Left cardiac atrium (tissue), 4 donors: ENCODE measurements at regions of chr1 and their contacts with region 1.

Region 1: DNA sequence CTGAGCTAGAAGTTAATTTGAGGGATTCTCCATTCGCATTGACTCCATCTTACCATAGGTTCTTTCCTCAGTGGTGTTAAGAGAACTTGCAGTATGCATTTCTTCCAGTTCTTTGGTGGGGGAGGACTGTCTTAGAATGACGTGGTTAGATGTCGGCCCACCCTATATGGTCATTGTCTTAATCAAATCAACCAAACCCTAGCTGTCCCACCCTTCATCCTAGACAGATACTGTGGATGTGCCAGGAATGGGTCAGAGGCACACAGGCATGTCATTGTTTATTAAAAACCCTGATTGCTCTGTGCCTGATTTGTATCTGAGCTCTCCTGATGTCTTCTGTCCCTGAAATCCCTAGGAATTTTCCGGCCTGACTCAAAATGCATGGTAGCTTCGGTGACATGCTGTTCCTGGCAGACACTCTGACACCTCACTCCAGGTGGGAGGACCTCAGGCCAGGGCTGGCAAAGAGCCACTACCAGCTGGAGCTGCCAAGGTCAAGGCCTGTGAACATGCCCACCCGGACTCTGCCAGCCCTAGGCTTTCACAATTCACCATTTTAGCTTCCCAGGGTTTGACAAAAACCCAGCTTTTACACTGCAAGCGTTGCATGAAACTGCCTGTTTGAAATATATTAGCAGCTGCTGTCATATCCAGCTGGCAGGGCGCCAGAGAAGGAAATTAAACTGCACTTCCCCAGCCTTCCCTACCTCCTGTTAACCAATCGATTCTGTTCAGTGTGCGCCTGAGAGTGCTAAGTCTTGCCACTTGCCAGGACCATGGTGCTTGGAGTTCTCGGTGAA is 134.0 kb downstream of the FAM78B start:
- DNase-seq: no peak
- ATAC-seq: no peak

Region 2: GRCh38 chr1:165965857-165966256 is 66.9 kb before region 1 on chr1:
- intact Hi-C with region 1: no loop called
- DNase-seq: no peak
- ATAC-seq: no peak

Region 3: GRCh38 chr1:166136222-166136621 is 103.5 kb after region 1 on chr1:
- intact Hi-C with region 1: loop called in 1 of 2 experiments (anchors 5 kb)
- DNase-seq: peak; percentile 57
- ATAC-seq: peak in 1 of 2 donors; percentile 94

Region 4: DNA sequence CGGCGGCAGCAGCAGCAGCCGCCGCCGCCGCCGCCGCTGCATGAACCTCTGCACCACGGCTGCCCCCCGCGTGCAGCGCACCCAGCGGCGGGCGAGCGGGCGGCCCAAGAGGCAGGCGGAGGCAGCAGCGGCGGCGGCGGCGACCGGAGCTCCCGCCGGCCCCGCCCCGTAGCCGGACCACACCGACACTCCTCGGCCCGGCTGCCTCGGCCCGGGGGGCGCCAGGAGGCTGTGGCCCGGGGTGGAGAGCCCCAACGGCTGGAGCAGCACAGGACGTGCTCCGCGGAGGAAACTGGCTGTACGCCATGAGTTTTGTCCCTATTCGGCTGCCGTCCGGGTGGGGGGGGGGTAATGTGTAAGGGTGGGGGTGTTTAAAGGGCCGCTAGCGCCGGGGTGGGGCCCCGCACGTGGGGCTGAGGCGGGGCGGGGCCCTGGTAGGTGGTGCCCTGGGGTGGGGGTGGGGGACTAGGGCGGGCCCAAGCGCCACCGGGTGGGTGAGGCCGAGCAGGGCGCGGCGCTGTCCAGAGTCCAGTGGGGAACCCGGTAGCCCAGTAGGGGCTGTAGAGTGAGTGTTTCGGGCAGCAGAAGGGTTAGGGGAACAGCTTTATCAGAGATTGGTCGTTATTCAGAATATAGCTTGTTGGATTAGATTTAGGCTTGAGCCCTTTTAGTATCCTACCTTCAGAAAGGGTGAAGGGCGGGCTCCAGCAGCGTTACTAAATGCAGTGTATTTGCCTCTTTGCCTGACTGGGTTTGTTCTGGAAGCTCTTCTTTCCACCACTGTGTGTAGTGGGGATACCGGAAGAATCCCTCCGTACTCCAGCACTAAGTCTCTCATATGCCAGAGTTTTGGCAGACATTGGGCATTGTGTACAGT is 134.2 kb after region 1 on chr1 and contains the start of gene FAM78B:
- intact Hi-C with region 1: loop called in 1 of 2 experiments (anchors 10 kb)
- DNase-seq: peak; percentile 83
- ATAC-seq: peak; percentile 93 to 95
- total RNA-seq, gene FAM78B: 6.0 to 11.9 TPM